ENCODE measurements at regions of chr11 and their contacts with region 1.

Region 1: GRCh38 chr11:104076455-104076854 is 40.0 kb downstream of the DDI1 start:
- DNase-seq: no peak
- H3K4me3 ChIP-seq: no peak overlapping the region
- H3K27ac ChIP-seq: no peak overlapping the region
- H3K4me1 ChIP-seq: peaks cover 0 to 3% (median 0%) of the 10 kb centered on the region in 4 experiments; a peak in 2 of 7 replicates
- H3K27me3 ChIP-seq: no peaks in the 10 kb centered on the region
- CTCF ChIP-seq: no peak
- EP300 ChIP-seq: no peak
- POLR2A ChIP-seq: no peak
- RAD21 ChIP-seq: no peak

Region 2: DNA sequence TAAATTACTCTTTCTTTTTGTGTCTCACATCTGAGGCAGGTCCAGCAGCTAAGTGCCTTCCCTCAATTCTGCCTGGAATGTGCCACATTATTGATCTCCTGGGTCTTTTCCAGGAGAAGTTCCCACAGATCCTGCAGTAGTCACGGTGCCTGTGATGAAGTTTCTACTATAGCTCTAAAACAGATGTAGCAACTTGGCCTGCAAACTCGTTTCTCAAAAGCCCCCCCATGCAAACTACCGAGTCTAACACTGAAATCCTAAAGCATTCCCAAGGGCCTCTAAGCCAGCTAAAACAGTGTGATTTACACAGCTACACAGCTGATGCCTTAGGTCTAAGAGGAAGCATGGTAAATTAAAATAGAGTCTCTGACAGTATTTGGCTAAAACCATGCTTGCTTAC is 14.3 kb after region 1 on chr11:
- CTCF ChIA-PET with region 1: interaction called, 26 read pairs
- POLR2A ChIA-PET with region 1: no interaction called
- DNase-seq: no peak
- H3K4me3 ChIP-seq: no peak overlapping the region
- H3K27ac ChIP-seq: no peak overlapping the region
- H3K4me1 ChIP-seq: no peaks in the 10 kb centered on the region
- H3K27me3 ChIP-seq: no peaks in the 10 kb centered on the region
- CTCF ChIP-seq: no peak
- EP300 ChIP-seq: no peak
- POLR2A ChIP-seq: no peak
- RAD21 ChIP-seq: no peak

Region 3: DNA sequence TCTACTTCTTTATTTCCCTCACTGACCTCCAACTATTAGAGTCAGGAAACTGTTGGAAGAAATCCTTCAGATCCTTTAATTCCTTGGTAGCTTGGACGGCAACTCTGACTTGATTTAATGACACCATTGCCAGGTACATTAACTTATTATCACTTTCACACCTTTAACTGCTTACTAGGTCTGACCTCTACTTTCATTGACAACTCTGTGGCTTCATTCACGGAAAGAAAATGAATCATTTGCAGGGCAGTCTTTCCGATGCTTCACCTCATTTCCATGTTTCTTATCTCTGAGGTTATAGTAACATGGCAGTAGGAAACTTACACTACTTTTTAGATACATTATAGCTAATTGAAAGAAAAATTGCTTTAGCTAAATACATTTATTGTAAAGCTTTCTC is 170.1 kb after region 1 on chr11:
- CTCF ChIA-PET with region 1: no interaction called
- POLR2A ChIA-PET with region 1: no interaction called
- DNase-seq: no peak
- H3K4me3 ChIP-seq: no peak overlapping the region
- H3K27ac ChIP-seq: no peak overlapping the region
- H3K4me1 ChIP-seq: no peaks in the 10 kb centered on the region
- H3K27me3 ChIP-seq: peaks cover 0 to 1% (median 0%) of the 10 kb centered on the region in 4 experiments; a peak in 1 of 7 replicates
- CTCF ChIP-seq: no peak
- EP300 ChIP-seq: no peak
- POLR2A ChIP-seq: no peak
- RAD21 ChIP-seq: no peak

Measured in H1 (cell line).